ENCODE measurements at regions of chrX and their contacts with region 1.

Region 1: DNA sequence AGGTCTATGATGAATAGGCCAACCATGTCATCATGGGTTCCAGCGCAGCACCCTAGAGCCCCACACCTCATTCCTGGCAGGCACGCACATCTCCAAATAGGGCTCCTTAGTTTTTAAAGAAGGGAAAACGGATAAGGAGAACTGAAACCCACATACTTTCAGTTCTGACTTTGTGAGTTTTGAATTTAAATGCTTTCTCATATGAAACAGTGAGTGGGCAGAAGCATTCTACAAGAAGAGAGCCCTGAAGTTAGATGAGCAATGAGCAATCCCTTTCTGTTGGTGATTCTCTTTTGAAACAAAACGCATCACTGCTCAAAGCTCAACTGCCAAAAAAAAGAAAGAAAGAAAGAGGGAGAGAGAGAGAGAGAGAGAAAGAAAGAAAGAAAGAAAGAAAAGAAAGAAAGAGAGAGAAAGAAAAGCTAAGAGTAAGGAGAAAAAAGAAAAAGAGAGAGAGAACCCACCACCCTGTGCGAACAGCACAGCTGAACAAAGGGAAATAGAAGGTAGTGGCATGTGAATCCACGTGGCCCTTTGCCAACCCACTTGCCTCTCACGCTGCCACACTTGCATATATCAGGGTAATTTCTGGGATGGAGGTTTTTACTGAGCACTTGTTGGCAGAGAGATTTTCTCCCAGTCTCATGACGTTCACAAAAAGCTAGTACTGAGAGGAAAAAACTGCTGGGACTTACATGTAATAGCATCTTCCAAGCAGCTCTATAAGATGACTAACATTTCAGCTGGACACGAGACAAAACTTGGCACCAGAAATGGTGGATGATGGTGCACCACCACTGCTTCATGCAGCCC is 31.0 kb downstream of the TMSB4X start:
- DNase-seq: no peak
- H3K4me3 ChIP-seq: peak overlapping the region in 1 of 2 donors; percentile 32
- H3K27ac ChIP-seq: peak overlapping the region; percentile 50 to 65
- H3K4me1 ChIP-seq: peaks cover 0 to 15% of the 10 kb centered on the region in 2 donors
- H3K27me3 ChIP-seq: no peaks in the 10 kb centered on the region
- CTCF ChIP-seq: no peak

Region 2: DNA sequence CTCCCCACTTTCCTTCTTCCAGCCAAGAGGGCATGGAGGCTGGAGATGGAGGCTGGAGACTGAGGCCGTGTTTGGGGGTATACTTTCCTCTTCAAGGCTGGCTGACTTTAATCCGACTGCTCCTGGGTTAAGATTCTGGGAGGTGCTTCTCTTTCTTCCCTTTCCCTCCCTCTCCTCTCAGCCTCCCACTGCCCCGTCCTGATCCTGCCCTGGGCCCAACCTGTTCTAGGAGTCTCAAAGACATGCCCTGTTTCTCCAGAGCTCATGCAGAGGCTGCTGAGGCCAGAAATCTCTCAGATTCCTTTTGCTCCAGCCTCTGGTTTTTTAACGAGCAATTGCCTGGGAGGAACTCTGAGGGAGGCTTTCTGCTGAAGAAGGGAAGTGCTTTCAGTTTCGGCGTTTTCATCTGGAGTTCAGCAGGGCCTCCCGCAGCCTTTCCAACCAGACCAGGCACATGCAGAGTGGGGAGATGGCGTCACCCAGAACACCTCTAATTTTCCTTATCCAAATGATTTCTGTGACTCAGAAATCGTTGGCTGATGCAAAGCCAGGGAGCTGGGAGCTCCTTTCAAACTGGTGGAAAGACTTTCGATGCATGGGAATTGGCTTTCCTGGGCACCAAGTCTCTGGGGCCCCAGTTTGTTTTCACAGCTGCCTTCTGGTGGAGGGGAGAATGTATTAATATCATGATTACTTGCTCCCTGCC is 73.0 kb after region 1 on chrX:
- intact Hi-C with region 1: loop called (anchors 5 kb)
- DNase-seq: peak; percentile 20 to 78
- H3K4me3 ChIP-seq: peak overlapping the region in 1 of 2 donors; percentile 35
- H3K27ac ChIP-seq: peak overlapping the region; percentile 71 to 76
- H3K4me1 ChIP-seq: peaks cover 0 to 7% of the 10 kb centered on the region in 2 donors
- H3K27me3 ChIP-seq: no peaks in the 10 kb centered on the region
- CTCF ChIP-seq: no peak

Region 3: GRCh38 chrX:13293700-13294099 is 287.8 kb after region 1 on chrX:
- intact Hi-C with region 1: no loop called
- DNase-seq: no peak
- H3K4me3 ChIP-seq: no peak overlapping the region
- H3K27ac ChIP-seq: no peak overlapping the region
- H3K4me1 ChIP-seq: no peaks in the 10 kb centered on the region
- H3K27me3 ChIP-seq: no peaks in the 10 kb centered on the region
- CTCF ChIP-seq: no peak

Measured in ascending aorta (tissue), 2 donors.